Calu3 (cell line): ENCODE measurements at regions of chr3 and their contacts with region 1.

Region 1: DNA sequence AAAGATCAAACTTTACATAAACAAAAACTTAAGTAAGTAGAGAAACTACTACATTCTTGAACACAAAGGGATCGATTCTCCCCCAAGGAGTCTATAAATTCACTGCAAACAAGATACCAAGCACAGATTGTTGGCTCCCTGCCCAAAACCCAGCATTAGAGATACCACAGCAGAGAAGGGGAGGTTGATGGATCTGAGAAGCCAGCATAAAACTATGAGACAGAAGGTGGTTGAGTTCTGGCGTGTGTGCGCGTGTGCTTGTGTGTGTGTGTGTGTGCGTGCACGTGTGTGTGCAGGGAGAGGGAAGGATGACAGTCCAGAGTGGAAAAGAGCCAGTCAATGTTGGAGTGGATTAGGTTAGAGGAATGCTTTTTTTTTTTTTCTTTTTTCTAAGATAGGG is 143.2 kb upstream of the PRR20G start:
- DNase-seq: peak; percentile 38
- H3K4me3 Mint-ChIP-seq: no peak overlapping the region
- H3K27ac Mint-ChIP-seq: no peak overlapping the region
- H3K4me1 Mint-ChIP-seq: no peaks in the 10 kb centered on the region
- H3K27me3 Mint-ChIP-seq: peaks cover 72% of the 10 kb centered on the region
- CTCF ChIP-seq: no peak

Region 2: DNA sequence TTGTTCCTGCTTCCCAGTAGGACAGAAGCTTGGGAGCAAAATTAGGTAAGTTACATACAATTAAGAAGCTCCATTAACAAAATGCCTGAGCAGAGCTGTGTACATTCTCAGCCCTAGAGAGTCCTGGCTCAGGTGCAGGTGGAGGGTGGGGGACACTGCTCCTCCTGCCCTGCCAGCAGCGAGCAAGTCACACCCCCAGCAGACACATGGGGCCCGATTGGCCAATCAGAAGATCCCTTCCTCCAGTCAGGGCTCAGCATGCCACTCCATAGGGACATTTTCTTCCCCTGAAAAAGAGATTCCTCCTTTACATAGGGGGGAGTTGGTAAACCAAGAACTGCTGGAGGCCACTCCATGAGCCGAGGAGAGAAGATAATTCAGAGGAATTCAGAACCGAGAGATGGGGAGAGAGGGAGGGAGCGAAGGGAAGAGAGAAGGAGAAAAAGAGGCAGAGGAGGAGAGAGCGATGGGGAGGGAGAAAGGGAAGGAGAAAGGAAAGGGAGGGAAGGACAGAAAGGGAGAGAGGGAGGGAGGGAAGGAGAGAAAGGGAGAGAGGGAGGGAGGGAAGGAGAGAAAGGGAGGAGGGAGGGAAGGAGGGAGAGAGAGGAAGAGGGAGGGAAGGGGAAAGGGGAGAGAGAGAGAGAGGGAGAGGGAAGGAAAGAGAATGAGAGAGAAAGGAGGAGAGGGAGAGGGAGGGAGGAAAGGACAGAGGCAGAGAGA is 385.9 kb before region 1 on chr3:
- CTCF ChIA-PET with region 1: no interaction called
- intact Hi-C with region 1: loop called (anchors 10 kb)
- DNase-seq: peak; percentile 66
- H3K4me3 Mint-ChIP-seq: no peak overlapping the region
- H3K27ac Mint-ChIP-seq: no peak overlapping the region
- H3K4me1 Mint-ChIP-seq: peaks cover 18% of the 10 kb centered on the region
- H3K27me3 Mint-ChIP-seq: peaks cover 9% of the 10 kb centered on the region
- CTCF ChIP-seq: no peak

Region 3: DNA sequence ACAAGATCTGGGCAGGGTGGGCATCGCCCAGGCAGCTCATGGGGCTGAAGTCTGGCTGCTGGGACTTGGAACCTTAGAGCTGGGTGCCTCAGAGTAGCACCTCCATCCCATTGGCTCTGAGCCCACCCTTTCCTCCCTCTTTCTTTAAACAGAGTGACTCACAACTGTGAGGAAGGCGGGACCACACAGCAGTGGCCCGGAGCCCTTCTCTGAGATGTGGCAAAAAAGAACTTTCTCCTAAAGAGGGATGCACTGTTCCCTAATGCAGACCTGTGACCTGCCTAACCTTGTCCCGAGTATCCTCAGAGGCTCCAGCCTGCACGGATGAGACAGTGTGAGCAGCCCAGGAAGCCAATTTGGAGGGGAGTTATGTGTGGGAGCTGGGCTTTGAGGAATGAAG is 166.8 kb before region 1 on chr3:
- CTCF ChIA-PET with region 1: no interaction called
- intact Hi-C with region 1: no loop called
- DNase-seq: peak; percentile 30
- H3K4me3 Mint-ChIP-seq: no peak overlapping the region
- H3K27ac Mint-ChIP-seq: no peak overlapping the region
- H3K4me1 Mint-ChIP-seq: peaks cover 5% of the 10 kb centered on the region
- H3K27me3 Mint-ChIP-seq: peaks cover 84% of the 10 kb centered on the region
- CTCF ChIP-seq: no peak

Region 4: DNA sequence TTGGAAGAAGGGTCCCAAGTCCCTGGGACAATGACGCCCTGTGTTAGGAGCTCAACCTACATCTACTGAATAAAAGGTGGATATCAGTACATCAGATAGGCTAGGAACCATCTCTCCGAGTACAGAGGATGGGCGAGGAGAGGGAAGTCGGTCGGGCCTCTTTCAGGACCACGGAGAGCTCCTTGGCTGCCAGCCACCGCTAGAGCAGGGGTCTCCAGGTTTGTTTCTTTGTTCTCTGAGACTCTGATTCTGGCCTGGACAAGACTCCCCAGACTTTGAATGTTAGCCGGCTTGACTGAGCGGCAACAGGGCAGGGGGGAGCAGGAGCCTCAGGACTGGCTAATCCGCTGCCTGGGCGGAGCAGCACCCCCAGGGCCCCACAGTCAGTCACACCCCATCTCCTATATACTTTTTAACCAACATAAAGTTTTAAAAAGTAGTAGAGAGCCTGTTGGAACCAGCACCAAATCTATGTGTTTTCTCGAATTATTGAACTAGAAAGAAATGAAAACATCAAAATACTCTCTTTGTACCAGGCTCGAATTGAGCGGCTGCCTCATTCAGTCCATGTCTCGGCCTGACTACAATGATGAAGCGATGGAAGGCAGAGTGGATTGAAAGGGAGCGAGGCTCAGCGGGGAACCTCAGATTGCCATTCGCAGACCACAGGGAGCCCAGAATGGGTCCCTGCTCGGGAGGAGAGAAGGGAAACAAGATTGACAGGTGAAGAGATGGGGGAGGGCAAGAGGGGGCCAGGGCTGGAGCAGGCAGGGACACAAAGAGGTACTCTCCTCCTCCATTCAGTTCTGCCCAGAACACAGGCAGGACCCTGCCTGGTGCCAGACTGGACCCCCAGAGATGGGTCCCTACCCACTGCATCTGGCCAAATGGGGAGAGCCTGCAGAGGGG is 27.9 kb after region 1 on chr3:
- CTCF ChIA-PET with region 1: no interaction called
- intact Hi-C with region 1: no loop called
- DNase-seq: peak; percentile 32
- H3K4me3 Mint-ChIP-seq: no peak overlapping the region
- H3K27ac Mint-ChIP-seq: no peak overlapping the region
- H3K4me1 Mint-ChIP-seq: peaks cover 21% of the 10 kb centered on the region
- H3K27me3 Mint-ChIP-seq: peaks cover 80% of the 10 kb centered on the region
- CTCF ChIP-seq: no peak